Right ventricle myocardium inferior (tissue), 1 donor: ENCODE measurements at regions of chr4 and their contacts with region 1.

Region 1: GRCh38 chr4:151325111-151325948 is at the start of gene SH3D19:
- DNase-seq: peak; percentile 77
- ATAC-seq: peak; percentile 95
- total RNA-seq, gene SH3D19: 108 TPM

Region 2: DNA sequence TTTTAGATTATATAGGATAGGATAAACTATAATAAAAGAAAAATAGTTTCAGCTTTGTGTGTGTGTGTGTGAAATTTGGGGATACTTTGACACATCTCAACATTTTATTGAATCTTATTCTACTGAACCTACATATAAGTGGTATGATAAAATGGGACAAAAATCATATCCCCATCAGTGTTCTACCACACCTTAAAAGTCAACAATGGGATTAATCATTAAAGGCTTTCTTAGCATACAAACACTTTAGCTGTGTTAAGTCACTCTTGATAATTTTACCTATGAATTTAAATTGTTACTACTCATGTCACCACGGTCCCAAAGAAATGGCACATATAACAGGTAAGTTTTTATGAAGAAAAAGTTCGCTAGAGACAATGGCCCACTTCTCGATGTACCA is 272.5 kb before region 1 on chr4:
- intact Hi-C with region 1: no loop called
- DNase-seq: no peak
- ATAC-seq: no peak

Region 3: DNA sequence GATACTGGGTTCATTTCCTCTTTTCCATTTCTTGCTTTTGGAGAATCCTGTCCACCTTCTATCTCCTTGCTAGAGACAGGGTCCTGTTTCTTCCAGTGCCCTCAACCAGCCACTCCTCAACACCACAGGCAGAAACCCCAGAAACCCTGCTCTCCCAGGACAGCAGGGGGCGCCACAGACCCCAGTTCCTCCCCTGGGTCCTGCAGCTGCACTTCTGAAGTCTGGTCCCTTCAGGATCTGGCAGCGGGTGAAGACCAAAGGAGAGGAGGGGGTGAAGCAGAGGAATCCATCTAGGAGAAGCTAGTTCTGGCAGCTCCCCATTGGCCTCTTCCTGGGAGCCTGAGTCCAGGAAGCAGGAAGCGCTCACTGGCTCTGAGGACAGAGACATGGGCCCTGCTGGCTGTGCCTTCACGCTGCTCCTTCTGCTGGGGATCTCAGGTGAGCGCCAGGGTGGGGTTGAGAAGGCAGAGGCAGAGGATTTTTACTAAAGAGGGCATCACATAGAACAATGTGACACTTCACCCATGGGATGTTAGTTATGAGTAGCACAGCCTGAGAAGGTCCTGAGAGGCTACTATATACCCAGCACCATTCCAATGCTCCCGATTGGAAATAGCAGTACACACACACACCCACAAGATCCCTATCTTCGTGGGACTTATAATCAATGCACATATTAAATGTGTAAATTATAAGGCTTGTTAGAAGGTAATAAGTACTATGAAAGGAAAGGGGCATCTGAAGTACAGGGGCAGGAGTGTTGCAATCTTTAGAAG is 48.4 kb before region 1 on chr4 and contains the start of gene PRSS48:
- intact Hi-C with region 1: loop called (anchors 5 kb)
- DNase-seq: peak; percentile 62
- ATAC-seq: peak; percentile 61
- total RNA-seq, gene PRSS48: not detected

Region 4: DNA sequence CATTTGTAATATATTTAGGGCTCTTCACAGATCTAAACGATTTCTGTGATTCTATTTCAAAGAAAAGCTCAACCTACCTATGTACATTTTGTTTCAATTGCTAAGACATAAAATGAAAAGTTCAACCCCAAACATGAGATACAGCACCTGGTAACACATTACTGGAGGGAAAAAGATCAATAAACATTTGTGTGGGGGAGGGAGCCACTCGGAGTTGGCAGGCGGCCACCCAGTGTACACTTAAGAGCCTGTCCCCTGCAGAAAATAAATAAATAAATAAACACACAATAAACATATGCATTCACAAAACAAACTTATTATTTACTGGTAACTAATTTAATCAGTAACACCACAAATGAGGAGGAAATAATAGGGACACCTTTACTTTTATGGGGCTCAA is 29.1 kb before region 1 on chr4:
- intact Hi-C with region 1: loop called (anchors 2 kb)
- DNase-seq: no peak
- ATAC-seq: no peak